Activated B cell treated with CpG ODN at 0.5 μM for 24 hours (primary cell): ENCODE measurements at regions of chr17 and their contacts with region 1.

Region 1: DNA sequence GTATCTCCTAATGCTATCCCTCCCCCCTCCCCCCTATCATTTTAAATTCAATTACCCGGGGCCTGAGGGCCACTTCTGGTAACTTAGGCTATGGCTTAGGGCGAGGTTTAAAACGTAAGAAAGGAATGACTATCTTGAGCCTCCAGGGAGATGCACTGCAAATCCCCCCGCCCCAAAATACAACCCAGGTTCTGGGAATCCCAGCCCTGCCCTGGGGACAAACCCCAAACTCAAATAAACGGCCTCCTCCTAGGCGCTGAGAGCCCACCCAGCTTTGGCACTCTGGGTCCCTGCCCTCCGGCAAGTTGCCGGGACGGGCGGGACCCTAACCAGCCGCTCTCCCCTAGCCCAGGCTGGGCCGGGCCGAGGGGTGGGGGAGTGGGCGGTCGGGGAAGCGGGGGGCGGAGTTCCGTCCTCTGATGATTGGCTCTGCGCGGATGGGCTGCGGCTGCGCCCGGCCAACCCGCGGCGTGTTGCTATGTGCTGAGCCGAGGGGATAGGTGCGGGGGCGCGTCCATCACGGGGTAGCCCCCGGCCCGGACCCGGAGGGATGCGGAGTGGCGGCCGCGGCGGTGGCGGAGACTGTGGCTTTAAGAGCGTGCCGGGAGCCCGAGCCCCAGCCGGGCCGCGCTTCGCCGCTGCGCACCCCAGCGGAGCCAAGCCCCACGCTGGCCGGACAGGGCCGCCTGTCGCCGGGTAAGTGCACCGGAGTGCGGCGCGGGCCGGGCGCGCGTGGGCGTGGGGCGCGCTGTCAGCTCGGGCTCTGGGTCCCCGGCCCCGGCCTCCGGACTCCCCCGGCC is at the start of gene YPEL2:
- DNase-seq: peak; percentile 86
- ATAC-seq: peak; percentile 95
- H3K4me3 Mint-ChIP-seq: peak within 1 kb of the TSS; percentile 90
- H3K27ac Mint-ChIP-seq: peak within 1 kb of the TSS; percentile 81
- H3K4me1 Mint-ChIP-seq: peaks cover 60% of the 10 kb centered on the region
- H3K27me3 Mint-ChIP-seq: no peaks in the 10 kb centered on the region
- CTCF ChIP-seq: no peak
- total RNA-seq, gene YPEL2: 18.3 and 19.5 TPM in 2 replicates

Region 2: GRCh38 chr17:59190806-59191205 is 140.5 kb before region 1 on chr17:
- CTCF ChIA-PET with region 1: no interaction called
- POLR2A ChIA-PET with region 1: no interaction called
- intact Hi-C with region 1: no loop called
- DNase-seq: no peak
- ATAC-seq: no peak
- H3K4me3 Mint-ChIP-seq: no peak overlapping the region
- H3K27ac Mint-ChIP-seq: no peak overlapping the region
- H3K4me1 Mint-ChIP-seq: peaks cover 18% of the 10 kb centered on the region
- H3K27me3 Mint-ChIP-seq: no peaks in the 10 kb centered on the region
- CTCF ChIP-seq: no peak

Region 3: DNA sequence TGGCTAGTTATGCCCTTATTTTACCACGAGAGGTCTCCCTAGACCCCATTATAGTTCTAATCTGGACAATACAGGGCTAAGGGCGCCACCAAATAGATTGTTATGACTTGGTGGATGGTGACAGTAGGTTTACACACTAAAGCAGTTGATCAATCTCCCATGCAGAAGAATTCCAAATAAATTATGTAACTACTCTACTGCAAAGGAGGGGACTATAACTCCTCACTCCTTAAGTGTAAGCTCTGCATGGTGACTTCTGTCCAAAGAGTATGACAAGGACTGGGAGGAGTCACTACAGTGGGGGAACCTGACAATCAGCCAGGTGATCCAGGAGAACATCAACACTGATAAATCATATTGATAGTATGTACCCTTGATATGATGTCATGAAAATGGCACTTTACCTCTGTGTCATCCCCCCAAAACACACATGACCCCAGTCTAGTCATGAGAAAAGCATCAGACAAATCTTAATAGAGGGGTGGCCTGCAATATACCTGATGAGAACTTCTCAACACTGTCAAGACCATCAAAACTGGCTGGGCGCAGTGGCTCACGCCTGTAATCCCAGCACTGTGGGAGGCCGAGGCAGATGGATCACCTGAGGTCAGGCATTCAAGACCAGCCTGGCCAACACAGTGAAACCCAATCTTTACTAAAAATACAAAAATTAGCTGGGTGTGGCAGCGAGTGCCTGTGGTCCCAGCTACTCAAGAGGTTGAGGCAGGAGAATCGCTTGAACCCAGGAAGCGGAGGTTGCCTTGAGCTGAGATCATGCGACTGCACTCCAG is 20.0 kb before region 1 on chr17:
- CTCF ChIA-PET with region 1: interaction called, 27 read pairs
- POLR2A ChIA-PET with region 1: no interaction called
- intact Hi-C with region 1: loop called (anchors 1 kb)
- DNase-seq: no peak
- ATAC-seq: peak; percentile 99
- H3K4me3 Mint-ChIP-seq: no peak overlapping the region
- H3K27ac Mint-ChIP-seq: no peak overlapping the region
- H3K4me1 Mint-ChIP-seq: no peaks in the 10 kb centered on the region
- H3K27me3 Mint-ChIP-seq: no peaks in the 10 kb centered on the region
- CTCF ChIP-seq: peak; percentile 86

Region 4: DNA sequence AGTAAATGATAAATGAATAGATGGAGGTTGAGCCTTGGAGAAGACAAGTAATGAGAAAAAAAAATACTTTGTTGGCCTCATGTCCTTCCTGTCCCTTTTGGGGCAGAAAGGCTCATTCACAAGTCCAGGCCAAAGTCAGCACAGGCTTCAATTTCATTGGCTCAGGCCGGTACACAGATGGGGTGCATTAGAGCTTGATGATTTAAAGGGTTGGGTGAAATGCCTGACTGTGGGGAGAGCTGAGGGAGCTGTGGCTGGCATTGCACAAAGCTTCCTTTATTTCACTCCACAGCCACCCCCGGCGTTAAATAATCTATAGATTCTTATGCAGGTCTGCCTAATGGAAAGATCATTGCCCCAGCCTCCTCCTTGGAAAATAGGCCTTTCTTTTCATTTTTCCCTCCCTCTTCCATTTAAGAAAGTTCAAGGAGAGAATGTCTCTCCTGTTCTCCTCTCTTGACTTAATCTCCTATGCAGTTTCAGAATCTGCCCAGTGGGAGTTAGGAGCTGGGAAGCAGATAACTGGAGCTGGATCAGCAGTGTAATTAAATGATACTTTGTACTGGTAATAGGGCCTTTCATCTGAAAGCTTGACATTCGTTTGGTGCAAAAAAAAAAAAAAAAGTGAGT is 24.5 kb after region 1 on chr17:
- CTCF ChIA-PET with region 1: interaction called, 9 read pairs
- POLR2A ChIA-PET with region 1: interaction called, 56 read pairs
- intact Hi-C with region 1: no loop called
- DNase-seq: no peak
- ATAC-seq: no peak
- H3K4me3 Mint-ChIP-seq: no peak overlapping the region
- H3K27ac Mint-ChIP-seq: no peak overlapping the region
- H3K4me1 Mint-ChIP-seq: peaks cover 76% of the 10 kb centered on the region
- H3K27me3 Mint-ChIP-seq: no peaks in the 10 kb centered on the region
- CTCF ChIP-seq: no peak

Region 5: DNA sequence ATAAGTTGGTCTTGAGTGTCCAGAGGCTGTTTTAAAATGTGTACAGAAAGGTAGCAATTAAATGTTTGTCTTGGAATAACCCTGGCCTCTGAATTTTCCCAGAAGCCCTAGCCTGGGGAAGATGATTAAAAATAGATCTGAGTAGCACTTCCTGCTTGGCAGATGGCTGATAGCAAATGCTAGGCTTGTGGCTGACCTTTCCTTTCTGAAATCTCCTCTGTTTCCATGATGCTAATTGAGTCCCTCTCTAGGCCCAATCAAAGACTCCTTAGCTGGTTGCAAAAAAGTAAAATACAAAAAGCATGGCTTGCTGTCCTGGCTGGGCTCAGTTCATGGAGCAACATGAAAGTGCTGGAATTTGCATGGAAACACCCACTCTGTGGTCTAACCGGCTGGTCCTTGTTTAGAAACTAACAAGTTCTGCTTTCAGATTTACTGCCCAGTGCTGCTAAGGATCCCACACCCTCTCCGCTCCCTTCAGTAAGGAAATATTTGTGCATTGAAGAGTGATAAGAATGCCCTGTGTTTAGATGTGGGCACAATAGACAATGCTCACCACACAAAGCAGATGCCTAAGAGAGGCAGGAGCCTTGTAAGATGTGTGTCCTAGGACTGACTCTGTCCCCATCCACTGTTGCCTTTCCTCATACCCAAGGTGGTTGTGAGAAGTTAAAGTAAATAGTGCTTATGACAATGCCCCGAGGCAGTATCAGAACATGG is 41.0 kb after region 1 on chr17:
- CTCF ChIA-PET with region 1: interaction called, 18 read pairs
- POLR2A ChIA-PET with region 1: interaction called, 6 read pairs
- intact Hi-C with region 1: loop called (anchors 1 kb)
- DNase-seq: no peak
- ATAC-seq: peak; percentile 33
- H3K4me3 Mint-ChIP-seq: peak overlapping the region; percentile 59
- H3K27ac Mint-ChIP-seq: peak overlapping the region; percentile 89
- H3K4me1 Mint-ChIP-seq: peaks cover 88% of the 10 kb centered on the region
- H3K27me3 Mint-ChIP-seq: no peaks in the 10 kb centered on the region
- CTCF ChIP-seq: no peak

Region 6: GRCh38 chr17:59440784-59441441 is 109.6 kb after region 1 on chr17:
- CTCF ChIA-PET with region 1: interaction called, 222 read pairs
- POLR2A ChIA-PET with region 1: interaction called, 12 read pairs
- intact Hi-C with region 1: loop called (anchors 1 kb)
- DNase-seq: peak; percentile 56
- ATAC-seq: peak; percentile 91
- H3K4me3 Mint-ChIP-seq: no peak overlapping the region
- H3K27ac Mint-ChIP-seq: no peak overlapping the region
- H3K4me1 Mint-ChIP-seq: peaks cover 48% of the 10 kb centered on the region
- H3K27me3 Mint-ChIP-seq: peaks cover 4% of the 10 kb centered on the region
- CTCF ChIP-seq: peak; percentile 45

Region 7: GRCh38 chr17:60036796-60037612 is 705.7 kb after region 1 on chr17:
- CTCF ChIA-PET with region 1: no interaction called
- POLR2A ChIA-PET with region 1: no interaction called
- intact Hi-C with region 1: loop called (anchors 5 kb)
- DNase-seq: peak; percentile 56
- ATAC-seq: peak; percentile 94
- H3K4me3 Mint-ChIP-seq: no peak overlapping the region
- H3K27ac Mint-ChIP-seq: no peak overlapping the region
- H3K4me1 Mint-ChIP-seq: peaks cover 4% of the 10 kb centered on the region
- H3K27me3 Mint-ChIP-seq: peaks cover 11% of the 10 kb centered on the region
- CTCF ChIP-seq: no peak